ENCODE measurements at regions of chr6 and their contacts with region 1.

Region 1: DNA sequence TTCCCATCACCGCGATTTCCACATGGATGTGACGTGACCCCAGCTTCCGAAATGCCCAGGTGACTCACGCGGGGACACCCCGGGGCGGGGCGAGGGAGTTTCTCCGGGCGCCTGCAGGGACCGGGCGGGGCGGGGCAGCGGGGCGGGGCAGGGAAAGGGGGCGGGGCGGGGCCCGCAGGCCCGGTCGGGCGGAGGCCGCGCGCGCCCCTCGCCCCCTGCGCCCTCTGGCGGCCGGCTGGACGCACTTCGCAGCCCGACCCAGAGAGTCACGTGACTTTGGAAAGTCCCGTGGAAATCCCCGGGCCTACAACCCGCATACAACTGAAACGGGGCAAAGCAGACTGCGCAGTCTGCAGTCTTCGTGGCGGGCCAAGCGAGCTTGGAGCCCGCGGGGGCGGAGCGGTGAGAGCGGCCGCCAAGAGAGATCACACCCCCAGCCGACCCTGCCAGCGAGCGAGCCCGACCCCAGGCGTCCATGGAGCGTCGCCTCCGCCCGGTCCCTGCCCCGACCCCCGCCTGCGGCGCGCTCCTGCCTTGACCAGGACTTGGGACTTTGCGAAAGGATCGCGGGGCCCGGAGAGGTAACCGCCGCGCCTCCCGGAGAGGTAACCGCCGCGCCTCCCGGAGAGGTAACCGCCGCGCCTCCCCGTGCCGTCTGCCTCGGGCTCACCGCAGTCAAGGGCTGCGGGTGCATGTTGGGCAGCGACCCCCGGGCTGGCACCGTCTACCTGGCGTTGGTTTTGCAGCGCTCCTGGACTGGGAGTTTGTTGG is at the start of gene TNFAIP3:
- DNase-seq: peak; percentile 84
- ATAC-seq: peak; percentile 78
- H3K4me3 ChIP-seq: peak within 1 kb of the TSS; percentile 99
- H3K27ac ChIP-seq: peak within 1 kb of the TSS; percentile 72
- H3K4me1 ChIP-seq: peaks cover 5% of the 10 kb centered on the region; the same call in 1 of the 2 replicates
- H3K27me3 ChIP-seq: no peaks in the 10 kb centered on the region
- CTCF ChIP-seq: peak; percentile 63 to 83 (median 70)
- EP300 ChIP-seq: peak; percentile 64 to 90
- POLR2A ChIP-seq: peak; percentile 95
- RAD21 ChIP-seq: peak; percentile 73
- polyA plus RNA-seq, gene TNFAIP3: 18.0 to 31.5 TPM

Region 2: GRCh38 chr6:137767911-137768690 is 99.0 kb before region 1 on chr6:
- CTCF ChIA-PET with region 1: no interaction called
- POLR2A ChIA-PET with region 1: no interaction called
- RAD21 ChIA-PET with region 1: interaction called, 10 read pairs
- SMC1A ChIA-PET with region 1: interaction called, 7 read pairs
- in situ Hi-C with region 1: no loop called
- intact Hi-C with region 1: no loop called
- DNase-seq: peak; percentile 79
- ATAC-seq: peak; percentile 85
- H3K4me3 ChIP-seq: peak overlapping the region; percentile 13
- H3K27ac ChIP-seq: peak overlapping the region; percentile 92
- H3K4me1 ChIP-seq: peaks cover 26% of the 10 kb centered on the region
- H3K27me3 ChIP-seq: no peaks in the 10 kb centered on the region
- CTCF ChIP-seq: no peak
- EP300 ChIP-seq: peak; percentile 54 to 63; a peak in 3 of 4 replicates
- POLR2A ChIP-seq: no peak
- RAD21 ChIP-seq: no peak

Region 3: DNA sequence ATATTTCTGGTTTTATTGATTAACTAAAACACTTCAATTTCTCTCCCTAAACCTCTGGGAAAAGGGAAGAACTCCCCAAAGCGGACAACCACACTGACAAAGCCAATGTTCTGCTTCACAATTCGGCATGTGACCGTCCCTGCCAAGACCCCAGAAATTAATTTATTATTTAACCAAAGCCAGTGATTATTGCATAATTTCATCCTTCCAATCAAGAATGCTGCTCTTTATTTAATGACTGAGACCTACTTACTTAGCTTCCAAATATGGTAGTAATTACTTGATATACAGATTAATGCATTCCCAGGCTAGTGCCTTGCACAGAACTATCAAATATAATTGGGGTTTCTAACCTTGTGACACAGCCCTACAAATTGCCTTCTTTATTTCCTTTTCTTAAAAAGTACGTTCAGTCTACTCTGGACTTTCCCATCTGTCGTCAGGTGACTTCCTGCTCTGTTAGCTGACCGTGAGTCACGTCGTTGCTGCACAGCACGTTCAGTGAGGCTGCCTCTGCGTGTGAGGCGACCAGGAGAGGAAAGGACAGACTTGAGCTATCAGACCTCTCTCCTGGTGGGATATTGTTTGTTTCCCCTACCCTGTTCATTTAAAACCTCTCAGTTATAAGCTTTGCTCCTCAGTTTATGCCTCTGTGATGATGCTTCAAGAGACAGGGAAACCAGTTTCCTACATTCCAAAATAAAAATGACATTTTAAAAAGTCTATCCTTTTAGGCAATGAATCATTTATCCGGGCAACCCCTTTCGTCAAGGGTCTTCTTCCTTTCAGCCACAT is 55.8 kb before region 1 on chr6:
- CTCF ChIA-PET with region 1: interaction called, 13 read pairs
- POLR2A ChIA-PET with region 1: interaction called, 7 read pairs
- RAD21 ChIA-PET with region 1: interaction called, 21 read pairs
- SMC1A ChIA-PET with region 1: interaction called, 22 read pairs
- in situ Hi-C with region 1: no loop called
- intact Hi-C with region 1: no loop called
- DNase-seq: peak; percentile 95
- ATAC-seq: peak; percentile 95
- H3K4me3 ChIP-seq: peak overlapping the region; percentile 20
- H3K27ac ChIP-seq: peak overlapping the region; percentile 89
- H3K4me1 ChIP-seq: peaks cover 31% of the 10 kb centered on the region
- H3K27me3 ChIP-seq: no peaks in the 10 kb centered on the region
- CTCF ChIP-seq: no peak
- EP300 ChIP-seq: peak in 1 of 2 experiments; percentile 72; a peak in 2 of 4 replicates
- POLR2A ChIP-seq: peak; percentile 88
- RAD21 ChIP-seq: no peak

Region 4: GRCh38 chr6:137853569-137854213 is 13.4 kb before region 1 on chr6:
- CTCF ChIA-PET with region 1: interaction called, 4 read pairs
- POLR2A ChIA-PET with region 1: interaction called, 4 read pairs
- RAD21 ChIA-PET with region 1: interaction called, 6 read pairs
- SMC1A ChIA-PET with region 1: interaction called, 11 read pairs
- in situ Hi-C with region 1: no loop called
- intact Hi-C with region 1: no loop called
- DNase-seq: no peak
- ATAC-seq: no peak
- H3K4me3 ChIP-seq: no peak overlapping the region
- H3K27ac ChIP-seq: no peak overlapping the region
- H3K4me1 ChIP-seq: peaks cover 13% of the 10 kb centered on the region; the same call in 1 of the 2 replicates
- H3K27me3 ChIP-seq: no peaks in the 10 kb centered on the region
- CTCF ChIP-seq: no peak
- EP300 ChIP-seq: no peak
- POLR2A ChIP-seq: no peak
- RAD21 ChIP-seq: no peak

Region 5: DNA sequence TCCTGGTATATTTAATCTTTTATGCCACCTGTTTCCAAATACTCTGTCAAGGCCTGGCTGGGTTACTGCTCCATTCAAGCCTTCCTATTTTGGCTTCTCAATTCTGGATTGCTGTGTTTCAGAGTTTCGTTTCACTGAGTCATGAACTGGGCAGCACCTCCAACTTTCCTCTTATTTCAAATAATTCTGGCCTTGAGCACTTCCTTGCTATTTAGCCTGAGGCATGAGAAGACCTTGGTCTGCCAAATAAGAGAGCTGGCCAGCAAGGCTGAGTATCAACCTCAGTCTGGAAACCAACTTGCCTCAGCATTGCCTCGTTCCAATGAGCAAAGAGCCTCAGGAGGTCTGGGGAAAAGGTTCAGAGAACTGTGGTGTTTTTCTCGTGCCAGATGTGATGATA is 66.6 kb after region 1 on chr6:
- CTCF ChIA-PET with region 1: interaction called, 712 read pairs
- POLR2A ChIA-PET with region 1: interaction called, 30 read pairs
- RAD21 ChIA-PET with region 1: interaction called, 774 read pairs
- SMC1A ChIA-PET with region 1: interaction called, 1,237 read pairs
- in situ Hi-C with region 1: no loop called
- intact Hi-C with region 1: loop called (anchors 5 kb)
- DNase-seq: no peak
- ATAC-seq: no peak
- H3K4me3 ChIP-seq: no peak overlapping the region
- H3K27ac ChIP-seq: peak overlapping the region; percentile 53
- H3K4me1 ChIP-seq: peaks cover 28% of the 10 kb centered on the region
- H3K27me3 ChIP-seq: no peaks in the 10 kb centered on the region
- CTCF ChIP-seq: no peak
- EP300 ChIP-seq: no peak
- POLR2A ChIP-seq: no peak
- RAD21 ChIP-seq: no peak

Region 6: DNA sequence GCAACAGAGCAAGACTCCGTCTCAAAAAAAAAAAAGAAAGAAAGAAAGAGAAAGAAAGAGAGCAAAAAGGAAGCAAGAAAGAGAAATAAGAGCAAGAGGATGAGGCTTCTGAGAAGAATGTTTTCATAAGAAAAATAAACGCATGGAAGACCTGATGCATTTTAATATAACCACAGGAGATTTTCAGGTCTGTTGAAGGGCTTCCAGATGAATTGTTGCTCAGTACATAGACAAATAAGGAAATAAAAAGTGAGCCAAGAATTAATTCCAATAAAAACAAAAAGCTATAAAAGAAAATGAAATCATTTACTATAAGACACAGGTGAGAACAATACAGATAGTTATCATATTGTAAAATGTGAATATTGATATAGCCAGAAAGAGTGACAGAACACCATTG is 196.6 kb after region 1 on chr6:
- CTCF ChIA-PET with region 1: no interaction called
- POLR2A ChIA-PET with region 1: no interaction called
- RAD21 ChIA-PET with region 1: no interaction called
- SMC1A ChIA-PET with region 1: no interaction called
- in situ Hi-C with region 1: no loop called
- intact Hi-C with region 1: no loop called
- DNase-seq: no peak
- ATAC-seq: no peak
- H3K4me3 ChIP-seq: no peak overlapping the region
- H3K27ac ChIP-seq: no peak overlapping the region
- H3K4me1 ChIP-seq: no peaks in the 10 kb centered on the region
- H3K27me3 ChIP-seq: no peaks in the 10 kb centered on the region
- CTCF ChIP-seq: no peak
- EP300 ChIP-seq: no peak
- POLR2A ChIP-seq: no peak
- RAD21 ChIP-seq: no peak

Region 7: DNA sequence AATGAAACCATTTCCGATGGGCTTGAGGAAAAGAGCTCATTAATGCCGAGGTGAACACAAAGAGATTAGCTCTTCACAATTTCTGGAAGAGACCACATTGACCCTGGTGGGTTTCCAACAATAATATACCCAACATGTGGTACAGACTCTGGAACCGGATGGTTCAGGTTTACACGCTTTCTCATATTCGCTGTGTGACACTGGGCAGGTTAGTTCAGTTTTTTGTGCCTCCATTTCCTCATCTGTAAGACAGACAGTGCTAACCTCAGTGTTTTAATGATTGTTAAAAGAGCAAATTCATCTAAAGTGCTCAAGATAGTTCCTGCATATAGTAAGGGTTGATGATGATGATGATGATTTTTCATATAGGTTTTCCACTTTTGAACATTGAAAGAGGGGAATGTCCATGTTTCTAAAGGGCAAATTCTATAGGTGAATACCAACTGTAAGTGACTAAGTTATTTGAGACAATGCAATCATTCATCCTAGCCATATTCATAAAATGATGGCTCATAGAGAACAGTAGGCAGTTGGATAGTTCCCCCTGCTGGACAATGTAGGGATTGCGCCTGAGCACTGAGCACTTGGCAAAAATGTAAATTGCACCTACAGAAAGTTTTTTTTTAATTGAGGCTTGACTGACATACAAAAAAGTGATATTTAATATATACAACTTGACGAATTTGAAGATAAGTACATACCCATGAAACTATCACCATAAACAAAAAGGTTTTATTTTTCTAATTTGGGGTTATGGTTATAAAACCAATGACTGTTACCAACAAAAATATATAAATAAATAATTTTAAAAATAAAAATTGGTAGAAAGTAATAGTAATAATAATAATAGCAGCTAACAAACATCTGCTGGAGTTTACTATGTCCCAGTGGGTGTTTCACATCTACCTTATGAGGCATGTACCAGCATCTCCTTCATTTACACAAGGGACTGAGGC is 242.2 kb after region 1 on chr6:
- CTCF ChIA-PET with region 1: no interaction called
- POLR2A ChIA-PET with region 1: no interaction called
- RAD21 ChIA-PET with region 1: no interaction called
- SMC1A ChIA-PET with region 1: no interaction called
- in situ Hi-C with region 1: loop called (anchors 10 kb)
- intact Hi-C with region 1: loop called (anchors 5 kb)
- DNase-seq: peak; percentile 21
- ATAC-seq: peak; percentile 52
- H3K4me3 ChIP-seq: no peak overlapping the region
- H3K27ac ChIP-seq: no peak overlapping the region
- H3K4me1 ChIP-seq: 0 out of 2 replicates have a peak, but pooled peaks cover 5% of the 10 kb centered on the region
- H3K27me3 ChIP-seq: peaks cover 2 to 31% of the 10 kb centered on the region in 2 experiments
- CTCF ChIP-seq: peak; percentile 84 to 94 (median 91)
- EP300 ChIP-seq: no peak
- POLR2A ChIP-seq: no peak
- RAD21 ChIP-seq: peak; percentile 88